Thyroid gland (tissue), 4 donors: ENCODE measurements at regions of chr1 and their contacts with region 1.

Region 1: DNA sequence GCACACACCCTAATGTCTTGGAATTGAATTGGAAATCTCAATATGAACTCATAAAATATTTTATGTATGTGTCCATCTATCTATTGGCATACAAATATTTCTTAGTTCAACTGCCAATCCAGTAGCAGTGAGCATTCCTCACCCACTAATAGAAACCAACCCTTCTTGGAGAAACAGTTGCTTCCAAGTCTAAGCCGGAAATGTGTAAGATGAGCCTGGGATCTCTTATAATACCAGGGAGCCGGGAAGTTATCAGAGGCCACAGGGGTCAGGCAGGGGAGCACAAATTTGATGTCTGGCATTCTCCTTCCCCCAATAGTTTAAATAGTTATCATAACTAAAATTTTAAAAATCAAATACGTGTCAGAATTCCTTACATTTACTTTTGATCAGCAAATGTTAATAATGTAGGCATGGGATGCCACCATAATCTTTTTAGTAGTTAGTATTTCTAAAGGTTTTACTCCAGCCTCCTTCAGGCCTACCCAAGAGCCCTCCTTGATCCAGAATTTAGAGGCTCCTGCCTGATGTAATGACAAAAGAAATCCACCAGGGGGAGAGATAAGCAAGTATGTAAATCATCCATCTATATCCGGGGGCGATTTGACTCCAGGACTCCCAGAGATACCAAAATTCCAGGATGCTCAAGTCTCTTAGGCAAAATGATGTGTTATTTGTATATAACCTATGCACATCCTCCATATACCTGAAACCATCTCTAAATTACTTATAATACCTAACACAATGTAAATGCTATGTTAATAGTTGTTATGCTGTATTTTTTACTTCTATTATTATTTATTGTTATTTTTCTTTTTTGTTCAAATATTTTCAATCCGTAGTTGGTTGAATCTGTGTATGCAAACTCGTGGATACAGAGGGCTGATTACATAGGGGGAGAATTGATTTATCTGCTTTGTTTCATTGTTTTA is 218.7 kb upstream of the COA6 start:
- DNase-seq: peak; percentile 4 to 9
- H3K4me3 ChIP-seq: no peak overlapping the region
- H3K27ac ChIP-seq: no peak overlapping the region
- H3K4me1 ChIP-seq: no peaks in the 10 kb centered on the region
- H3K27me3 ChIP-seq: no peaks in the 10 kb centered on the region
- CTCF ChIP-seq: peak; percentile 52 to 80 (median 65)
- POLR2A ChIP-seq: no peak

Region 2: GRCh38 chr1:234246638-234247116 is 92.1 kb after region 1 on chr1:
- intact Hi-C with region 1: no loop called
- DNase-seq: no peak
- H3K4me3 ChIP-seq: no peak overlapping the region
- H3K27ac ChIP-seq: no peak overlapping the region
- H3K4me1 ChIP-seq: no peaks in the 10 kb centered on the region
- H3K27me3 ChIP-seq: no peaks in the 10 kb centered on the region
- CTCF ChIP-seq: no peak
- POLR2A ChIP-seq: no peak

Region 3: GRCh38 chr1:234309598-234310459 is 155.2 kb after region 1 on chr1:
- intact Hi-C with region 1: loop called (anchors 10 kb)
- DNase-seq: peak; percentile 96
- H3K4me3 ChIP-seq: no peak overlapping the region
- H3K27ac ChIP-seq: peak overlapping the region in 2 of 3 donors; percentile 24 to 66
- H3K4me1 ChIP-seq: peaks cover 6 to 10% of the 10 kb centered on the region in 2 donors
- H3K27me3 ChIP-seq: no peaks in the 10 kb centered on the region
- CTCF ChIP-seq: peak; percentile 75 to 89 (median 84)
- POLR2A ChIP-seq: no peak